Mucosa of descending colon (tissue), 3 donors: ENCODE measurements at regions of chr5 and their contacts with region 1.

Region 1: DNA sequence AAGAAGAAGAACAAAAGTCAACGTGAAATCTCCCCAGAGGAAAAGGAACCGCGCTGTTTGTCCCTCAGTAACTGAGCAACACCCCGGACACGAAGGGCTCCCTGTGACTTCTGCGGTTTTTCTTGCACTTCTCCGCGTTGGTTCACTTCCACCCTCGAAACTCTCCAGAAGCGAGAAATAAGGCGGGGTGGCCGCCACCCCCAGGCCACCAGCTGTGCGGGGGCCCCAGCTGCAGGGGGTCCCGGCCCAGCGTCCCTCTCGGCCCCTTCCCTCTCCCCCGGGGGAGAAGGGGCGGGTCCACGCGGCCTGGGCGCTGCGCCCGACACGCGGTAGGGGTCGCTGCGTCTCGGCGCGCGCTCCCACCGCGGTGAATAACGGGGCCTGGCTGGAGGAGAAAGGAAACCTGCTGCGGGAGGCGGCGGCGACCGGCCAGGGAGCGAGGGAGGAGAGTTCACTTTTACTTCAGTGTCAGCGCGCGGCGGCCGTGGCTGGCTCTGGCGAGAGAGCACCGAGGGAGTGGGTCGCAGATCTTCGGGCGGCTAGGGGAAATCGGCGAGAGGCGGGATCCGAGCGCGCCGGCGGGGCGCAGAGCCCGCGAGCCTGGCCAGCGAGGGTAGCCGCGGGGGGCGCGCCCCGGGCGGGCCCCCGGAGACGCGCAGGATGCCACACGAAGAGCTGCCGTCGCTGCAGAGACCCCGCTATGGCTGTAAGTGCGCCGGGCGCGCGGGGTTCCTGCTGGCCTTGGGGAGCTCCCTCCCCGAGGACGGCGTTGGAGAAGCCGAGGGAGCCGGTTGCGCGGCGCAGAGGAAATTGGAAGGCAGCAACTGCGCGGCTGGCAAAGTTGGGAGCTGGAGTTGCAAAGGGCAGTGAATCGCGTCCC is at the start of gene IQGAP2:
- DNase-seq: peak; percentile 82 to 91 (median 90)
- ATAC-seq: peak; percentile 85
- H3K4me3 ChIP-seq: peak within 1 kb of the TSS; percentile 76
- H3K4me1 ChIP-seq: peaks cover 14% of the 10 kb centered on the region
- CTCF ChIP-seq: peak; percentile 81
- total RNA-seq, gene IQGAP2: 59.7 to 159 (median 84.8) TPM

Region 2: DNA sequence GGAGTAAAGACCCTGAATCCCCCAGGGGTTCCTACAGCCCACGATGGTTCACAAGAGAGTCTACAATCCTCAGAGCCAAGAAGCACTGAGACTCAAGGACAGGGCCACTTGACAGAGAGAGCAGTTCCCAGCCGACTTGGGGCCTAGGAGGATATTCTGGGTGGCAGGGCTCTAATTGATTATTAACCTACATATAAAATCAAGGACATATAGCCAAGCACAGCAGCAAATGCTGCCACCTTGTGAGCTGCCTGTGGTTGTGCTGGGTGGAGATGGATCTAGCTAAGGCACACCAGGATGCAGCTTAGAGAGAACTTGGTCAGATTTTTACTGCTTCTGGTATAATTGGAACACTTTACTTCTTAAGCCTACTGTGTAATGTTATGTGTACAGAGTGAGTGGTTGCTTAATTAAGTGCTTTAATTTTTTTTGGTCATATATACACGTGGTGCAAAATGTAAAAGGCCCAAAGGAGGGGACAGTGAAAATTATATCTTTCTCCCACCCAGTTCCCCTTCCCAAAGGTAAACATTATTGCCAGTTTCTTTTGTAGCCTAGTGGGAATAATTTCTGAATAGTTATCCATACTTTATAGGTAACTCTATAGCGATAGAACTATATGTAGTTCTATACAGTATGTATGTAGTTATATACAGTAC is 141.3 kb after region 1 on chr5:
- intact Hi-C with region 1: loop called in 1 of 2 experiments (anchors 10 kb)
- DNase-seq: peak; percentile 71 to 79 (median 72)
- ATAC-seq: peak; percentile 79
- H3K4me3 ChIP-seq: no peak overlapping the region
- H3K4me1 ChIP-seq: peaks cover 45% of the 10 kb centered on the region
- CTCF ChIP-seq: peak; percentile 61